ENCODE measurements at regions of chr3 and their contacts with region 1.

Region 1: GRCh38 chr3:184811999-184812661 is at the start of gene VPS8:
- DNase-seq: peak; percentile 96
- H3K4me3 Mint-ChIP-seq: peak within 1 kb of the TSS; percentile 94
- H3K27ac Mint-ChIP-seq: peak within 1 kb of the TSS; percentile 95
- H3K4me1 Mint-ChIP-seq: peaks cover 74% of the 10 kb centered on the region
- H3K27me3 Mint-ChIP-seq: peaks cover 4% of the 10 kb centered on the region
- total RNA-seq, gene VPS8: 37.8 and 40.3 TPM in 2 replicates

Region 2: GRCh38 chr3:183435661-183436060 is 1376.5 kb before region 1 on chr3:
- intact Hi-C with region 1: loop called (anchors 10 kb)
- DNase-seq: no peak
- H3K4me3 Mint-ChIP-seq: no peak overlapping the region
- H3K27ac Mint-ChIP-seq: no peak overlapping the region
- H3K4me1 Mint-ChIP-seq: peaks cover 48% of the 10 kb centered on the region
- H3K27me3 Mint-ChIP-seq: peaks cover 2% of the 10 kb centered on the region

Region 3: GRCh38 chr3:184636741-184637316 is 175.3 kb before region 1 on chr3:
- intact Hi-C with region 1: loop called (anchors 2 kb)
- DNase-seq: peak; percentile 11
- H3K4me3 Mint-ChIP-seq: no peak overlapping the region
- H3K27ac Mint-ChIP-seq: no peak overlapping the region
- H3K4me1 Mint-ChIP-seq: no peaks in the 10 kb centered on the region
- H3K27me3 Mint-ChIP-seq: peaks cover 4% of the 10 kb centered on the region

Region 4: DNA sequence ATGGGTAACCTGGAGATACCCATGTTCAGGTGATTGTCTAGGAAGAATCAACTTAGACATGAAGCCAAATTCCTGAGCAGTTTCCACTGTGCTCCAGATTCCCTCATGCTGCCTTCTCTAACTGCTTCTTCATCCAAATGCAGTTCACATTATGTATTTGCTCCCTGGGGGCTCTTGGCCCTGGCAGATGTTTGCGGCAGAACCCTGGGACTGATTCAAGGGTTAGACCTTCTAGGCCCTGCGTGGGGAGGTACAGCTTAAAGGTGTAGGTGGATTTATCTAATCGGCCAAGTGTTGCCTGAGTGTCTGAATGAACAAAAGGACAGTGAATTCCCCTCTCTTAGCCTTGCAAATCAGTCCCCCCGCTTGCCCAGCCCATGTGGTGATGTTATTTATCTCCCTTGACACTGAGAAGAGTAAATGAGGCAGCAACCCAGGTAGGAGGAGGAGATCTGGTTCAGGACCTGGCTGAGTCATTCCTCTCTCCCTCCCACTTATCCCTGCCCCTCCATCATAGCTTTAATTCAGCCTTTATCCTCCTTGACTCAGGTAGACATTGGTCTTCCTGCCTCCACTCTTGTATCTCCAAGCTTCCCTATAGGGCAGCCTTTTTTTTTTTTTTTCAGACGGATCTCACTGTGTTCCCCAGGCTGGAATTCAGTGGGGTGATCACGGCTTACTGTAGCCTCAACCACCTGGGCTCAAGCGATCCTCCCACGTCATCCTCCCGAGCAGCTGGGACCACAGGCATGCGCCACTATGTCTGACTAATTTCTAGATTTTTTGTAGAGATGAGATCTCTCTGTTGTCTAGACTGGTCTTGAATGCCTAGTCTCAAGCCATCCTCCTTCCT is 155.1 kb before region 1 on chr3:
- intact Hi-C with region 1: no loop called
- DNase-seq: peak; percentile 2
- H3K4me3 Mint-ChIP-seq: peak overlapping the region; percentile 17
- H3K27ac Mint-ChIP-seq: peak overlapping the region; percentile 67
- H3K4me1 Mint-ChIP-seq: peaks cover 16% of the 10 kb centered on the region
- H3K27me3 Mint-ChIP-seq: no peaks in the 10 kb centered on the region

Region 5: GRCh38 chr3:184874709-184875644 is 62.8 kb after region 1 on chr3:
- intact Hi-C with region 1: loop called (anchors 1 kb)
- DNase-seq: no peak
- H3K4me3 Mint-ChIP-seq: no peak overlapping the region
- H3K27ac Mint-ChIP-seq: no peak overlapping the region
- H3K4me1 Mint-ChIP-seq: peaks cover 21% of the 10 kb centered on the region
- H3K27me3 Mint-ChIP-seq: no peaks in the 10 kb centered on the region

Region 6: DNA sequence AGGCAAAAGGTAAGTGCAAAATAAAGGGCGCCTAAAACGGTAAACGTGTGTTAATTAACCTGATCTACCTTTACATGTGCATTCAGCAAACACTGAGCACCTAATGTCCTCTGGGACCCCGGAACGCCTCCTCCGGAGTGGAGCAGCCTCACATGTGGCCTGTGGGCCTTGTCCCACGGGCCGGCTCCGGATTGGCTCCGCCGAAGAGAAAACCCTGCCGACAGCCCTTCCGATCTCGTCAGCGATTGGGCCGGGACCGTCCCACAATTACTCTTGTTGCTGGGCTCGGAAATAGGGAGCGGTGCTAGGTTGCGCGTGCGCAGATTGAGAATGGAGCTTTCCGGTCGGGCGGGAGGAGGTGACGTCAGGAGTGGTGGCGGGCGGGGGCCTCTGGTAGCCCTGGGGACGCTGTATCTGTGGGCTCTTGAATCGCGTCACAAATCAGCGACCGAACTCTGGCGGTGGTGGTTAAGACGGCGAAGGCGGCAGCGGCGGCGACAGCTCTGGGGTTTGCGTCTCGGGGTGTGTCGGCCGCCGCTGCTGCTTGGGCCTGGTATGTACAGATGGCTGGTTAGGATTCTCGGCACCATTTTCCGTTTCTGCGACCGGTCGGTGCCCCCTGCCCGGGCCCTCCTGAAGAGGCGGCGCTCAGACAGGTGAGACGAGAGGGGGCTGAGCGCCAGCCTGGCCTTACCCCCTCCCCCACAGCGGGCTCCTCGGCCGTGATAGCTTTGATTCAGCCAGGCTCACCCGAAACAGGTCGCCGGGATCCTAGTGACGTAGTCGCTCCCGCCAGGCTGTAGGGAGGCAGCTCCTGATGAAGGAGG is 773.9 kb after region 1 on chr3 and contains the start of gene SENP2:
- intact Hi-C with region 1: loop called (anchors 5 kb)
- DNase-seq: peak; percentile 99
- H3K4me3 Mint-ChIP-seq: peak within 1 kb of the TSS; percentile 86
- H3K27ac Mint-ChIP-seq: peak within 1 kb of the TSS; percentile 86
- H3K4me1 Mint-ChIP-seq: peaks cover 20% of the 10 kb centered on the region
- H3K27me3 Mint-ChIP-seq: no peaks in the 10 kb centered on the region
- total RNA-seq, gene SENP2: 33.5 and 34.6 TPM in 2 replicates

Region 7: DNA sequence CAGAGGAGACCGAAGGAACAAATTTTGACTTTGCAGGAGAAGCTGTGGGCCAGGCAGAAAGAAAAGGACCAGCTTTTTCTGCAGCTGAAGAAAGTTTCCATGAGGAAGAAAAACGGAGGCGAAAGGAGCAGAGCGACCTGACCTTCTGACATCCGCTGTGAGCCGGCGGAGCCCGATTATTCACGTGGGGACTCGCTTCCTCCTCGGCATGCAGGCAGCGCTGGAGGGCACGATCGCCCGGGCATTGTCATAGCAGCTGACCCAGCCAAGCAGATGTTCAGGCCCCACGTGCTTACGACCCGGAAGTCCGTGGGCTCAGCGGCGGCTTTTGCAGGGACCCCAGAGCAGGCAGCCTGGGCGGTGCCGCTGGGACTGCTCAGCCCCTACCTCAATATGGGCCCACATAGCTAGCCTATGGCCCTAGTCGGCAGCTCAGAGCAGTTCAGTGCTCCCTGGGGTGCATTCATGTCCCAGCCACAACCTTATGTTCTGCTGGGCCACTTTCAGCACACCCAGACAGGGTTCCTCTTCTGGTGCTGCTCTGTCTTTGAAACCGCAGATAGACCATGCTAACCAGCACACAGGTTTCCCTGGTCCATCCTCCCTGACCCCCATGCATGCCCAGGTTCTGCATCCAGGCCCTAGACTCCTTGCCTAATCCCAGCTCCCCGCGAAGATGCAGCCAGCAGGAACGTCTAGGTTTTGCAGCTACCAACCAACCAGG is 1960.7 kb after region 1 on chr3:
- intact Hi-C with region 1: loop called (anchors 10 kb)
- DNase-seq: peak; percentile 44
- H3K4me3 Mint-ChIP-seq: peak overlapping the region; percentile 86
- H3K27ac Mint-ChIP-seq: peak overlapping the region; percentile 92
- H3K4me1 Mint-ChIP-seq: peaks cover 20% of the 10 kb centered on the region
- H3K27me3 Mint-ChIP-seq: peaks cover 2% of the 10 kb centered on the region

Measured in activated T-helper 1 cell treated with anti-CD3 and anti-CD28 coated beads, Interleukin-12 subunit alpha, Interleukin-12 subunit beta, Interleukin-2, Interleukin-4 antibody, amounts not matched to agents 30 ng/mL and 10 ng/mL and 1 ng/mL, durations not matched to agents 14 hours and 24 hours and 36 hours (primary cell).